Naive thymus-derived CD4-positive, alpha-beta T cell (primary cell): ENCODE measurements at regions of chr16 and their contacts with region 1.

Region 1: DNA sequence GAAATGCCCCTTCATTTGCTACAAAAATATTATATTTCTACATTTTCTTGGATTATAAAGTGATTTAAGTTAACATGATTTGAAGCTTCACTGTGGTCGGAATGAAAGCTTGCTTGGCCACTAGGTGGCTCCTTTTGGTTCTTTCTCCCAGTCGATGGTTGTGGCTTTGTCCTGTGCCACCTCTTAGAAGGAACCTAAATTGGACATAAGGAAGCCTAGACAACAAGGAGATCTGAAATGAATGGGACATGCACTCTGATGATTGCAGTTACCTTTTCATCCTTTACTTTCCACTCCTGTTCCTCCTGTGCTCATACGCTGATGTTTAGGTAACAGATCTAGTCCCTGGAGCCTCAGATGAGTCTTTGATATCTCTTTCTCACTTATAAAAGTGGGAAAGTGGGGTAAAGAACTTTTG is 39.2 kb downstream of the FTO start:
- DNase-seq: peak in 6 of 9 donors; percentile 2 to 28 (median 18)
- ATAC-seq: no peak
- H3K4me3 ChIP-seq: no peak overlapping the region
- H3K4me3 Mint-ChIP-seq: no peak overlapping the region
- H3K27ac ChIP-seq: no peak overlapping the region
- H3K27ac Mint-ChIP-seq: peak overlapping the region in 1 of 9 donors; percentile 79
- H3K4me1 ChIP-seq: peaks cover 15 to 16% of the 10 kb centered on the region in 2 donors
- H3K4me1 Mint-ChIP-seq: peaks cover 21 to 56% (median 35%) of the 10 kb centered on the region in 7 donors
- H3K27me3 ChIP-seq: no peaks in the 10 kb centered on the region
- H3K27me3 Mint-ChIP-seq: no peaks in the 10 kb centered on the region

Region 2: GRCh38 chr16:53822936-53823529 is 79.9 kb after region 1 on chr16:
- CTCF ChIA-PET with region 1: interaction called, 5 read pairs
- POLR2A ChIA-PET with region 1: no interaction called
- intact Hi-C with region 1: loop called in 1 of 2 experiments (anchors 1 kb)
- DNase-seq: peak in 7 of 9 donors; percentile 63 to 86 (median 77)
- ATAC-seq: peak; percentile 97
- H3K4me3 ChIP-seq: no peak overlapping the region
- H3K4me3 Mint-ChIP-seq: no peak overlapping the region
- H3K27ac ChIP-seq: peak overlapping the region; percentile 47
- H3K27ac Mint-ChIP-seq: no peak overlapping the region
- H3K4me1 ChIP-seq: peaks cover 8 to 23% of the 10 kb centered on the region in 2 donors
- H3K4me1 Mint-ChIP-seq: peaks cover 0 to 19% (median 16%) of the 10 kb centered on the region in 7 donors
- H3K27me3 ChIP-seq: no peaks in the 10 kb centered on the region
- H3K27me3 Mint-ChIP-seq: no peaks in the 10 kb centered on the region